ENCODE measurements at regions of chr12 and their contacts with region 1.

Region 1: DNA sequence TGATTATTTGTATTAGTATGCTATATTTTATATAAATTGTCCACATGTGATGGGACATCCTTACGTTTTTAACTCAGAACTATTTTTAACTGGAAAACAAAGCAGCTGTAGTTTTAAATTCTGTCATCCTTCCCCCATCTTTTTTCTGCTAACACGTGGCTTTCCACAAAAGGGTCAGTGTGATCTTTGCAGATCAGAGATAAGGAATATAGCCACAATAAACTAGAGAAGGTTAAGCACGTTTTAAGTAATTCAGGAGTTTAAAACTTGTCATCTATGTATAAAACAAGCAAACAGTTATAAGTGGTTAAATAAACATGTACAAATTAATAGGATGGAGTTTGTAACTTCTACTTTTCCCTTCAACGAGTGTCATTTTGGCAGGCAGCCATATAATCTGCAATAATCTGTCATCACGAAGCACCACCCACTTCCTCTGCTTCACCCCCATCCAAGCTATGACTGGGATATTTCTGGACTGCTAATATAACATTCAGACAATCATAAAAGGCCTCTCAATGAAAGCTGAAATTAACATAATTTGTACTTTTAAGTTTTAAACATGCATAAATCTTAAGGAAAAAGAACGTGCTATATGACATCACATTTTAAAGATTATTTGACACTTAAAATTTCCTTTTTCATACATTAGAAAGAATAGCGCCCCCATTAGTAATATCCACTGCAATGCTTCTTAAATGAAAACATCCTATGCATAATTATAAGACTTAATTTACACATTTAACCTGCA is 15.3 kb downstream of the TAOK3 start:
- DNase-seq: peak; percentile 30 to 84
- ATAC-seq: peak; percentile 77 to 84 (median 81)
- H3K4me3 ChIP-seq: peak overlapping the region; percentile 73
- H3K4me3 Mint-ChIP-seq: peak overlapping the region; percentile 96
- H3K27ac ChIP-seq: peak overlapping the region; percentile 70
- H3K27ac Mint-ChIP-seq: peak overlapping the region; percentile 90 to 91
- H3K4me1 ChIP-seq: peaks cover 19% of the 10 kb centered on the region
- H3K4me1 Mint-ChIP-seq: peaks cover 57 to 70% of the 10 kb centered on the region in 2 donors
- H3K27me3 ChIP-seq: no peaks in the 10 kb centered on the region
- H3K27me3 Mint-ChIP-seq: no peaks in the 10 kb centered on the region
- CTCF ChIP-seq: peak; percentile 59

Region 2: DNA sequence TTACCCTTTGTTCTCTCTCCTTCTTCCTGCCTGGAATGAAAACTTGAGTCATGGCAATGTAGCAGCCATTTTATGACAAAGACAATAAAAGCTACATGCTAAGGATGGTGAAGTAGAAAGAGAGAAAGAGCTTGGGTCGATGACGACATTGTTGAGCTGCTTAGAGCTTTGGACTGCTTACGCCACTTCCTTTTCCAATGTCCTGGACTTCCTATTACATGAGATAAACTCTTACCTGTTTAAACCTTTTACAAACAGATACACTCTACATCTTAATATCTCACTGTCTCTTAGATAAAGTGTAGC is 151.4 kb before region 1 on chr12:
- intact Hi-C with region 1: no loop called
- DNase-seq: no peak
- ATAC-seq: no peak
- H3K4me3 ChIP-seq: no peak overlapping the region
- H3K4me3 Mint-ChIP-seq: no peak overlapping the region
- H3K27ac ChIP-seq: no peak overlapping the region
- H3K27ac Mint-ChIP-seq: peak overlapping the region; percentile 23 to 60
- H3K4me1 ChIP-seq: no peaks in the 10 kb centered on the region
- H3K4me1 Mint-ChIP-seq: peaks cover 0 to 10% of the 10 kb centered on the region in 2 donors
- H3K27me3 ChIP-seq: no peaks in the 10 kb centered on the region
- H3K27me3 Mint-ChIP-seq: no peaks in the 10 kb centered on the region
- CTCF ChIP-seq: no peak

Region 3: GRCh38 chr12:118307069-118307954 is 50.1 kb before region 1 on chr12:
- intact Hi-C with region 1: loop called (anchors 5 kb)
- DNase-seq: peak in 1 of 2 donors; percentile 4
- ATAC-seq: peak; percentile 58 to 80 (median 68)
- H3K4me3 ChIP-seq: no peak overlapping the region
- H3K4me3 Mint-ChIP-seq: peak overlapping the region; percentile 63
- H3K27ac ChIP-seq: peak overlapping the region; percentile 31
- H3K27ac Mint-ChIP-seq: peak overlapping the region; percentile 48 to 83
- H3K4me1 ChIP-seq: peaks cover 8% of the 10 kb centered on the region
- H3K4me1 Mint-ChIP-seq: peaks cover 50 to 52% of the 10 kb centered on the region in 2 donors
- H3K27me3 ChIP-seq: no peaks in the 10 kb centered on the region
- H3K27me3 Mint-ChIP-seq: no peaks in the 10 kb centered on the region
- CTCF ChIP-seq: no peak

Measured in natural killer cell (primary cell).